Posterior vena cava (tissue), 2 donors: ENCODE measurements at regions of chr10 and their contacts with region 1.

Region 1: GRCh38 chr10:112949875-112950507 is at the start of gene TCF7L2:
- DNase-seq: peak; percentile 98
- total RNA-seq, gene TCF7L2: 26.8 to 29.6 TPM

Region 2: GRCh38 chr10:113000876-113001598 is 51.0 kb after region 1 on chr10:
- intact Hi-C with region 1: loop called in 1 of 2 experiments (anchors 10 kb)
- DNase-seq: no peak

Region 3: DNA sequence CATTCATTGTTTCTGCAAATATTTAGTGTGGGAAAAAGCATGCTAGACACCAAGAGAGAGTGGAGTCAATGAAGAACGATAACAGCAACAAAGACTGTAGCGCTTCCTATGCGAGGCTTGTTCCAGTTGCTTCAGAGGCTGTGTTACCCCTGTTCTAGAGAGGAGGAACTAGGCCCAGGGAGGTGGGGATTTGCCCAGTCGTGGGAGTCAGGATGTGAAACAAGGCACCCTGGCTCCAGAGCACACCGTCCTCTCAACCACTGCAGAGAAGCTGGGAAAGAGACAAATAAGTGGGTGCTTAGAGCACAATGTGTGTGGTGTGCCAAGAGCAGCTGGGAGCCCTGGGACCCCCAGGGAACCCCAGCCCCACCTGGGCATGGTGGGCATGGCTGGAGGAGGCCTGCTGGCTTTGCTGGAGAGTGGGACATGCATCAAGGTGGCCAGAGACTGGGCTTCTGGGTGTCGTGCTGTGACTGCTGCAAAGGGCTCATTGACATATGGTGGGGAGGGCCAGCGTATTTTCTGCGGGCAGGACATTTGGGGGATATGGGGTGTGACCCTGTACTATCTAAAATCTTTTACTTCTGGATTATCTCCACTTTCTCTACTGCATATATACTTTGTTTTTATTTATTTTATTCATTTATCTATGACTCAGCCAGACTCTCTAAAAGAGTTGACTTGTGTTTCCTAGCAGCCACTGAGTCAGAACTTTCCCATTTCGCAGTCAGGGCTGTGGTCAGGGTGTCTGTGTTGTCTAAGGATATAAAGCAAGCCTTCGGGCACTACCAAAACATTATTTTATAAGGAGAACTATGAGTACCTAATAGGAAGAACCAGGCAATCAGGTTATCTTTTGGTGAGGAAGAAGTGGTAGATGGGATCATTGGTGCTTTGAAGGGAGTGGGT is 95.4 kb after region 1 on chr10:
- intact Hi-C with region 1: loop called (anchors 5 to 10 kb)
- DNase-seq: no peak

Region 4: GRCh38 chr10:113126229-113127201 is 176.5 kb after region 1 on chr10:
- intact Hi-C with region 1: loop called in 1 of 2 experiments (anchors 10 kb)
- DNase-seq: peak; percentile 92

Region 5: GRCh38 chr10:113385021-113385999 is 435.3 kb after region 1 on chr10:
- intact Hi-C with region 1: loop called in 1 of 2 experiments (anchors 10 kb)
- DNase-seq: peak; percentile 95